RWPE1 (cell line): ENCODE measurements at regions of chr17 and their contacts with region 1.

Region 1: DNA sequence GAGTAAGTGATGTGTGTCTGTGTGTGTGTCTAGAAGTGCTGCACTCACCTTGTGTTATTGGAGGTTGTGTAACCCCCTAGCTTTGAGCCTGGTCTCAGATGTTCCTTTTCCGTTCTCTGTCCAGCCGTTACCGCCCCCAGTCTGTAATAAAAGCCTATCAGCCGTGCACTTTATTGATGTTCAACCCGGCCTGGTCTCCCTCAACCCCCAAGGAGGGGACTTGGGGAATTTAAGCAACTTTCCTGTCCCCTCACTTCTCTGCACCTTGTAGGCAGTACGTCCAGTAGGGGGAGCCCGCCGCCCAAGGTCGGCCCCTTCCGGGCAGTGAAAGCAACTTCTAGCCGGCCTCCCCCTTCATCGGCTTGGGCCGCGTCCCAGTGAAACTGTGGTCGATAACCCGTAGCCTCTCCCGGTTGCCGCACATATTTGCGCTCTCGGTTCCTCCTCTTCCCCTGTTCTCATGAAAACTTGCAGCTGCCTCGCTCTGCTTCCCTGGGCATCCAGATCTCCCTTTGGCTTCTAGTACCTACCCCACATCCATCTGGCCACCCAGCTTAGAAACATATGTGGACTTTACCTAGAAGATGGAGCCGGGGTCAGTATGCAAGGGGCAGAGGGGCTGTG is 7.9 kb downstream of the PNPO start:
- DNase-seq: peak; percentile 69
- H3K27ac ChIP-seq: peak overlapping the region; percentile 74
- CTCF ChIP-seq: peak; percentile 96

Region 2: GRCh38 chr17:47776330-47777197 is 172.7 kb before region 1 on chr17:
- CTCF ChIA-PET with region 1: no interaction called
- POLR2A ChIA-PET with region 1: interaction called, 15 read pairs
- DNase-seq: peak; percentile 58
- H3K27ac ChIP-seq: no peak overlapping the region
- CTCF ChIP-seq: peak; percentile 84

Region 3: DNA sequence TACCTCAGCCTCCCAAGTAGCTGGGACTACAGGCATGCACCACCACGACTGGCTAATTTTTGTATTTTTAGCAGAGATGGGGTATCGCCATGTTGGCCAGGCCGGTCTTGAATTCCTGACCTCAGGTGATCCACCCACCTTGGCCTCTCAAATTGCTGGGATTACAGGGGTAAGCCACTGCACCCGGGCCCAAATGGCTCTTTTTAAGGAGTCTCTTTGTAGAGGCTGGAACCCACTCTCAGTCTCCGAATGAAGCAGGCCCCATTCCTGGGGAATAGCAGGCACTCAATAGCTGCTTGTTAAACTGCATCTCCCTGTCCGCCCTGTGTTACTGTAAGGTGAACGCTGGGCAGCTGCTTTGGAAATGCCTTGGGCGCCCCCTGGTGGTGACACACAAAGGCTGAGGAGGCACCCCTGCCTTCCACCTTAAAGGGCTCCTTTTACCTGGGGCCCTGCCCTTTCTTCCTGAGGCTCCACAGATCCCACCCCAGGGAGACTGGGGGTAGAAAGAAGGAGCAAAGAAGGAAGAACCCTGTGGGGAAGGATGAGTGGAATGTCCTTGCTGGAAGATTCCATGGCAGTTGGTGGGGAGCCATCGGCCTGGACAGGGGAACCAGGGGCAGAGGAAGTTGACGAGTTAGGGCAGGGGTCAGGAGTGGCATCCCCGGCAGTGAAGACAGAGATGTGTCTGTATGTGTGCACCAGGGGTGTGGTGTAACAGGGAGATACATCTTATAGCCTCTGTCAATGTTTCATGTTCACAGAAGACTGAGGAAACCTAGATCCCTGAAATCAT is 59.3 kb before region 1 on chr17:
- CTCF ChIA-PET with region 1: interaction called, 10 read pairs
- POLR2A ChIA-PET with region 1: no interaction called
- DNase-seq: peak; percentile 64
- H3K27ac ChIP-seq: no peak overlapping the region
- CTCF ChIP-seq: peak; percentile 96

Region 4: GRCh38 chr17:47970704-47971463 is 21.6 kb after region 1 on chr17 and contains the start of gene CDK5RAP3:
- CTCF ChIA-PET with region 1: interaction called, 17 read pairs
- POLR2A ChIA-PET with region 1: no interaction called
- DNase-seq: peak; percentile 97
- H3K27ac ChIP-seq: peak within 1 kb of the TSS; percentile 78
- CTCF ChIP-seq: peak; percentile 100